CD8-positive, alpha-beta memory T cell (primary cell): ENCODE measurements at regions of chr19 and their contacts with region 1.

Region 1: DNA sequence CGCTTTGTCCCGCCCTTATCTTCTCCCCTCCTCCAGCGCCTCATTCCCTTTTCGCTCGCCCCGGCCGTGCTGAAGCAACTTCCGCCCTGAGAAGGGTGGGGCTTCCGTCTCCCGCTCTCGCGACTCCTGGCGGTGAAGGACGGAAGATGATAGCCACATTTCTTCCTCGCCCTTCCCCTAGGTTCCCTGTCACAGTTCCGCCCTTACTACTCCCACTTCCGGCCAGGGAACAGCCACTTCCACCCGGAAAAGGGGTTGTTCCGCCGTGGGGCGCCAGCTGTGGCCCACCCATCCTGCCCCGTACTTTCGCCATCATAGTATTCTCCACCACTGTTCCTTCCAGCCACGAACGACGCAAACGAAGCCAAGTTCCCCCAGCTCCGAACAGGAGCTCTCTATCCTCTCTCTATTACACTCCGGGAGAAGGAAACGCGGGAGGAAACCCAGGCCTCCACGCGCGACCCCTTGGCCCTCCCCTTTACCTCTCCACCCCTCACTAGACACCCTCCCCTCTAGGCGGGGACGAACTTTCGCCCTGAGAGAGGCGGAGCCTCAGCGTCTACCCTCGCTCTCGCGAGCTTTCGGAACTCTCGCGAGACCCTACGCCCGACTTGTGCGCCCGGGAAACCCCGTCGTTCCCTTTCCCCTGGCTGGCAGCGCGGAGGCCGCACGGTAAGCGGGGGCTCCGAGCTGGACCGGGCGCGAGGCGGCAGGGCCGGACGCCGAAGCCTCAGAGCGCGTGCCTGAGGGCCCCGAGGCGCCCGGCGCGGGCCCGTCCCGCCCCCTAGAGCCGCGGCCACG is at the start of gene RPS19:
- DNase-seq: peak; percentile 96 to 99 (median 98)
- H3K4me3 ChIP-seq: peak within 1 kb of the TSS; percentile 79
- H3K4me3 Mint-ChIP-seq: peak within 1 kb of the TSS; percentile 88 to 99 (median 92)
- H3K27ac ChIP-seq: peak within 1 kb of the TSS; percentile 93
- H3K27ac Mint-ChIP-seq: peak within 1 kb of the TSS; percentile 86 to 100 (median 96)
- H3K4me1 ChIP-seq: peaks cover 48% of the 10 kb centered on the region
- H3K4me1 Mint-ChIP-seq: peaks cover 43 to 50% (median 46%) of the 10 kb centered on the region in 3 donors
- H3K27me3 ChIP-seq: no peaks in the 10 kb centered on the region
- H3K27me3 Mint-ChIP-seq: peaks cover 0 to 4% of the 10 kb centered on the region in 2 donors
- total RNA-seq, gene RPS19: 3,036 to 3,142 TPM

Region 2: DNA sequence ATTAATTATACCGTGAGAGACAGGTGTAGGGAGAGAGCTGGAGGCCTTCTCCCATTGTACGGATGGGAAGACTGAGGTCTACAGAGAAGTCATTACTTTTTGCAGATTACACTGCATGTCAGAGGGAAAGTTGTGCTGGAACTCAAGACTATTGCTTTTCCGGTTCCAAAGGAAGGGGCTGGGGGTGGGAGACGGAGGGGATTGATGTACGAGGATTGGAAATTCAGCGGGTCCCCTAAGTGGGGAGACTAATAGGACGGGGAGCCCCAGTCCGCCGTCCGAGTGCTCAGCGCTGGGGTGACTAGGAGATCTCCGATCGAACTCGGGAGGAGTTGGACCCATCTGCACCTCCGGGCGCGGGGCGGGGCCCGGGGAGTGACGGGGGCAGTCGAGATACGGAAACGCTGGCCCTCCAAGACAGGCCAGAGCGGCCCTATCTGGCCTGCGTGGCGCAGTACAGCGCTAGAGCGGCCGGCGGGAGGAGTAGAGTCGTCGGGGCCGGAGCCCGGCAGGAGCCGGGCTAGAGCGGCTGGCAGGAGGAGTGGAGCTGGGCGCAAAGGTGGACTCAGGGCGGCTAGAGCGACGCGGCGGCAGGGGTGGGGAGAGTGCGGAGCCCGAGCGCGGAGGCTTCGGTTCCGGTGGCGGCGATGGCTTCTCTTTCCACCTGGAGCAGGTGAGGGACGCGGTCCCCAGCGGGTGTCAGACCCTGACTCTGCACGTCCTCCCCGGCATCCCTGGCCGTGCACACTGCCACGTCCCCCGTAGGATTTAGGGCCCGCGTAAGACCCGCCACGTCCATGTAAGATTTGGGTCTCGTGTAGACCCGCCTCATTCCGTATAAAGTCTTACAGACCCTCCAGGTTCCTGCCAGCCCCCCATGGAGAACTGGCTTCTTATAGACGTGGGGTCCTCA is 24.3 kb after region 1 on chr19:
- CTCF ChIA-PET with region 1: interaction called, 227 read pairs
- POLR2A ChIA-PET with region 1: interaction called, 42 read pairs
- DNase-seq: peak; percentile 72 to 91 (median 83)
- H3K4me3 ChIP-seq: peak overlapping the region; percentile 100
- H3K4me3 Mint-ChIP-seq: peak overlapping the region; percentile 85 to 99 (median 94)
- H3K27ac ChIP-seq: peak overlapping the region; percentile 90
- H3K27ac Mint-ChIP-seq: peak overlapping the region; percentile 91 to 98 (median 97)
- H3K4me1 ChIP-seq: peaks cover 62% of the 10 kb centered on the region
- H3K4me1 Mint-ChIP-seq: peaks cover 54 to 65% (median 57%) of the 10 kb centered on the region in 3 donors
- H3K27me3 ChIP-seq: no peaks in the 10 kb centered on the region
- H3K27me3 Mint-ChIP-seq: peaks cover 0 to 2% of the 10 kb centered on the region in 2 donors

Region 3: GRCh38 chr19:41892173-41892902 is 32.5 kb after region 1 on chr19:
- CTCF ChIA-PET with region 1: interaction called, 227 read pairs
- POLR2A ChIA-PET with region 1: interaction called, 42 read pairs
- DNase-seq: no peak
- H3K4me3 ChIP-seq: peak overlapping the region; percentile 32
- H3K4me3 Mint-ChIP-seq: peak overlapping the region in 1 of 7 donors; percentile 18
- H3K27ac ChIP-seq: no peak overlapping the region
- H3K27ac Mint-ChIP-seq: peak overlapping the region in 4 of 8 donors; percentile 87 to 97 (median 94)
- H3K4me1 ChIP-seq: peaks cover 82% of the 10 kb centered on the region
- H3K4me1 Mint-ChIP-seq: peaks cover 54 to 78% (median 63%) of the 10 kb centered on the region in 3 donors
- H3K27me3 ChIP-seq: no peaks in the 10 kb centered on the region
- H3K27me3 Mint-ChIP-seq: peaks cover 0 to under 1% of the 10 kb centered on the region in 2 donors

Region 4: DNA sequence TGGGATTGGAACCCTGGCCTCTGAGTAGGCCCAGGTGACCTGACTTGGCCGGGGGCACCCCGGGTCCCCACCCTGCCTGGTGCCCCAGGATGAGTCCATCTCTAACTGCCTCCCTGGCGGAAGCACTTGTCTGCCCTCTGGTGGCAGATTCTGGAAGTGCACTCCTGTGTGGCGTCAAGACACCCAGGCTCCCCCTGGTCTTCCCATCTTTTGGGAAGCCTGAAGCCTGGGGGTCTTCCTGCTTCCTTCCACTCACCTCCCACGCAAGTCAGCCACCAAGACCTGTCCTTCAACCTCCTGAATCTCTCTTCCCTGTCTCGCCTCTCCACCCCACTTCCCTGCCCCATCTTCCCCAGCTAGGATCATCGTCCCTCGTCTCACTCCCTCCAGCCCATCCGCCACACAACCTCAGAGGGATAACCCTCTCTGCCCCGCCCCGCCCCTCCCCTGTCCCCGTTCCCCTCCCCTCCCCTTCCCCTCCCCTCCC is 91.9 kb after region 1 on chr19:
- CTCF ChIA-PET with region 1: interaction called, 48 read pairs
- POLR2A ChIA-PET with region 1: interaction called, 24 read pairs
- DNase-seq: peak; percentile 72 to 90 (median 84)
- H3K4me3 ChIP-seq: no peak overlapping the region
- H3K4me3 Mint-ChIP-seq: peak overlapping the region in 3 of 7 donors; percentile 23 to 48 (median 37)
- H3K27ac ChIP-seq: no peak overlapping the region
- H3K27ac Mint-ChIP-seq: peak overlapping the region in 7 of 8 donors; percentile 43 to 93 (median 84)
- H3K4me1 ChIP-seq: peaks cover 16% of the 10 kb centered on the region
- H3K4me1 Mint-ChIP-seq: peaks cover 21 to 39% (median 29%) of the 10 kb centered on the region in 3 donors
- H3K27me3 ChIP-seq: no peaks in the 10 kb centered on the region
- H3K27me3 Mint-ChIP-seq: peaks cover 0 to 4% of the 10 kb centered on the region in 2 donors

Region 5: DNA sequence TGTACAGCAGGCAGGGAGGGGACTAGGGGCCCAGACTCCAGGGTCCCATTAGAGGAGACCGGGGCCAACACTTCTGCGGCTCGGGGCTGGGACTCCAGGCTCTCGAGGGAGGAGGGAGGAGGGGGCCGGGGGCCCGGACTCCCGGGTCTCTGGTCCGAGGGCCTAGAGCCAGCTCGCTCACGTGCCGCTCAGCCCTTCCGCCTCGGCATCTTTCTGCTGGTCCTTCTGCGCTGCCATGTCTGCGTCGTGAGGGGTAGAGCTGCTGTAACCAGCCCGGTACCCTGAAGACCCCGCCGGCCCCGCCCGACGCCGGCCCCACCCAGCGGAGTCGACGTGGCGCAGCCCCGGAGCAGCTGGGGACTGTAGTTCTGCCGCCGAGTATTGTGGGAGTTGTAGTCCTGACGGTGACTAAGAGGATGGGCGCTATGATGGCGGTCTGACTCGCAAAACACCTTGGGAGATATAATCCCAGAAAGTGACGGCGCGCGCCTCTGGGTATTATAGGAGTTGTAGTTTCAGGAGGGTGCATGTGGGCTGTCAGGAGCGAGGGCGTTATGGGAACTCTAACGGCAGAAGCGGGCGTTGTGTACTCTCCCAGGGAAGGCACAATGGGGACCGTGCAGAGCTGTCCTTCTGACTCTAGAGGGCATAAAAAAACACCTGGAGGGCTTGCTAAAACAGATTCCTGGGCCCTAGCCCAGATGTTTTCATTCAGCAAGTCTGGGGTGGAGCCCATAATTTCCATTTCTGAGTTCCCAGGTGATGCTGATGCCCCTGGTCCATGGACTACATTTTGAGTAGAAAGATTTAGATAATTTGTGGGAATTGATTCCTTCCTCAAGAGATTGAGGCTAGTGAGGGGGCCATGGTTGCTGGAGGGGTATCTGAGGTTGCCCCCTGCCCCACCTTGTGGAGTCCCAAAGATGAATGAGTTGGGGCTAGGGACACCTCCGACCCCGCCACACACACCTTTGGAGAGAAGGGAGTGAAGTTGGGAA is 99.5 kb after region 1 on chr19 and contains the start of gene RABAC1:
- CTCF ChIA-PET with region 1: interaction called, 32 read pairs
- POLR2A ChIA-PET with region 1: interaction called, 20 read pairs
- DNase-seq: peak; percentile 79 to 90 (median 82)
- H3K4me3 ChIP-seq: peak within 1 kb of the TSS; percentile 92
- H3K4me3 Mint-ChIP-seq: peak within 1 kb of the TSS; percentile 92 to 96 (median 94)
- H3K27ac ChIP-seq: peak within 1 kb of the TSS; percentile 86
- H3K27ac Mint-ChIP-seq: peak within 1 kb of the TSS; percentile 82 to 98 (median 94)
- H3K4me1 ChIP-seq: peaks cover 16% of the 10 kb centered on the region
- H3K4me1 Mint-ChIP-seq: peaks cover 17 to 22% (median 21%) of the 10 kb centered on the region in 3 donors
- H3K27me3 ChIP-seq: no peaks in the 10 kb centered on the region
- H3K27me3 Mint-ChIP-seq: no peaks in the 10 kb centered on the region
- total RNA-seq, gene RABAC1: 74.7 to 83.3 TPM

Region 6: GRCh38 chr19:41978470-41978869 is 118.7 kb after region 1 on chr19:
- CTCF ChIA-PET with region 1: no interaction called
- POLR2A ChIA-PET with region 1: no interaction called
- DNase-seq: no peak
- H3K4me3 ChIP-seq: no peak overlapping the region
- H3K4me3 Mint-ChIP-seq: no peak overlapping the region
- H3K27ac ChIP-seq: no peak overlapping the region
- H3K27ac Mint-ChIP-seq: no peak overlapping the region
- H3K4me1 ChIP-seq: no peaks in the 10 kb centered on the region
- H3K4me1 Mint-ChIP-seq: no peaks in the 10 kb centered on the region
- H3K27me3 ChIP-seq: no peaks in the 10 kb centered on the region
- H3K27me3 Mint-ChIP-seq: no peaks in the 10 kb centered on the region